K562 (cell line): ENCODE measurements at regions of chr3 and their contacts with region 1.

Region 1: DNA sequence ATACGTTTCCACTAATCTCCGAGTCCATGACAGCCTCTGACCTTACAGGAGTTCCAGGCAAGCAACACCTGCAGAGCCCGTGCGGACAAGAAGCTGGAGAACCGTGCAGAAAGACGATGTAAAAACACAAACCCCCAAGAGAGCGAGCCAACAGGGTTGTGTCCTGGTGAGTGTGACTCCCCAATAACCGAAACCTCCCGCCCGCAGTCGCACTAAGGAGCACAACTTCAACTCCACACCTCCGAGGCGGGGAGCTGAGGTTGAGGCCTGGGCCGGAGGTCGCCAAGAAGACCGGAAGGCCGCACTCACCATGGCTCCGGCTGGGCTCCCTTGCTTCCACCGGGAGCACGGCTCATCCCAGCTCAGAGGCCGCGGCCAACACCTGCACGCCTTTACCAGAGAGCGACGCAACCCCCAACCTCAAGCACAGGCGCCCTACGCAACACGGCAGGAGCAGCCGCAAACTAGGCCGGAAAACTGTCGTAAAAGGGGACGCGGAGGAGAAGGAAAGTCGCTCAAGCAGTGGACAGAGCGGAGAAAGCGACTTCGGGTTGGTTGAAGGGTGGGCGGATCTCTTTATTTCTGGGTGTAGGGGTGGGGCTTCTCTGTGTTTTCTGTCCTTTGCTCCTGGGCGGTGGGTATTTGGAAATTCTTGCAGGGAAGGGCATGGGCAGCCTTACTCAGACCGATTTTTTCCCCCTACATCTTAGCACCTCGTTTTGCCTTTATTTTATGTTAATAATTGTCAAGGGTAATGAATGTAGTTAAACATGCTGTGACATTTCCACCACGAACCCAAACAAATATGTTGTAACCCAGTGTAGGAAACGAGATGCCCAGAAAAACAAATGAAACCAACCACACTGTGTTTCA is at the start of gene DNAJC19:
- DNase-seq: peak; percentile 88 to 97 (median 89)
- ATAC-seq: peak; percentile 96
- H3K4me3 ChIP-seq: peak within 1 kb of the TSS; percentile 94
- H3K27ac ChIP-seq: peak within 1 kb of the TSS; percentile 82
- H3K4me1 ChIP-seq: peaks cover 2 to 11% of the 10 kb centered on the region in 2 experiments; a peak in 3 of 5 replicates
- H3K27me3 ChIP-seq: no peaks in the 10 kb centered on the region; a peak in 1 of 5 replicates
- CTCF ChIP-seq: no peak
- EP300 ChIP-seq: no peak
- POLR2A ChIP-seq: peak; percentile 93
- RAD21 ChIP-seq: no peak
- polyA plus RNA-seq, gene DNAJC19: 116 to 136 TPM

Region 2: DNA sequence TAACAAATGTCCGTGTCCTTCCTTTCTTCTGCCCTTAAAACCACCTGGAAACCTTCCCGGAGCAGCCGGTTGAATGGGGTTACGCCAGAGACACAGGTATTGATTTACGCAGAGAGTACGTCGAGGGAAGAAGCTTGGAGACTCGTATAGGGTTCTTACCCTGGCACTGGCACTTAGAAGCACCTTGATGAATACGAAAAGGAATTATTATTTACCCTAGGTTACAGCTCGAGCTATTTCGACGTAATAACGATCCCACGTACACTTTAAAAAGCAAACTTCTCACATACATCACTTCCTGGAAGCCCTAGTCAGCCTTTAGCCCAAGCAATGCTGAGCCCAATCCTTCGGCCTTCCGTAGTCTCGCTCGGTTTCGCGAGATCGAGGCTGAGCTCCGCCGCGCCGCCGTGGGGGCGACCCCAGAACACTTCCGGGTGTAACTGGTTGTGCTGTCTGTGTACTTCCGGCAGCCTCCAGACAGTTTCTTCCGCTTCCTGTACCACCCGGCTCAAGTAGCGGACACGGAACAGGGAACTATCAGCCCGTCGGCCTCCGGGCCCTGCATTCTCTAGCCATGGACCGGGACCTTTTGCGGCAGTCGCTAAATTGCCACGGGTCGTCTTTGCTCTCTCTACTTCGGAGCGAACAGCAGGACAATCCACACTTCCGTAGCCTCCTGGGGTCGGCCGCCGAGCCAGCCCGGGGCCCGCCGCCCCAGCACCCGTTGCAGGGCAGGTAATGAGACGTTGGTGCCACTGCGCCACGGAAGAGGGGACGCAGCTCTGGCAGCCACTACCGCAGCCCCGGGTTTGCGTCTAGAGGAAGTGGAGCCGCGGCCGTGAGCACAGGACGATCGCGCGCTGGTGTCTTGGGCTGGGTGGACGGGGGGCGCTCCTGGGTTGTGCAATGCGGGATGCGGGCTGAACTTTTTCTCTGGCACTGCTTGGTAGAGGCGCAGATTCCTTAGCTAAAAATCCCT is 387.6 kb before region 1 on chr3 and contains the start of gene TTC14:
- CTCF ChIA-PET with region 1: no interaction called
- POLR2A ChIA-PET with region 1: no interaction called
- in situ Hi-C with region 1: loop called (anchors 25 kb)
- intact Hi-C with region 1: loop called (anchors 10 kb)
- DNase-seq: peak; percentile 90 to 96 (median 92)
- ATAC-seq: peak; percentile 99
- H3K4me3 ChIP-seq: peak within 1 kb of the TSS; percentile 97
- H3K27ac ChIP-seq: peak within 1 kb of the TSS; percentile 87
- H3K4me1 ChIP-seq: no peaks in the 10 kb centered on the region; a peak in 1 of 5 replicates
- H3K27me3 ChIP-seq: no peaks in the 10 kb centered on the region
- CTCF ChIP-seq: 0 out of 6 replicates have a peak, but pooled peaks of 1 of the 3 experiments have one; percentile 13
- EP300 ChIP-seq: no peak
- POLR2A ChIP-seq: peak; percentile 88
- RAD21 ChIP-seq: no peak
- polyA plus RNA-seq, gene TTC14: 10.0 to 11.3 TPM

Region 3: DNA sequence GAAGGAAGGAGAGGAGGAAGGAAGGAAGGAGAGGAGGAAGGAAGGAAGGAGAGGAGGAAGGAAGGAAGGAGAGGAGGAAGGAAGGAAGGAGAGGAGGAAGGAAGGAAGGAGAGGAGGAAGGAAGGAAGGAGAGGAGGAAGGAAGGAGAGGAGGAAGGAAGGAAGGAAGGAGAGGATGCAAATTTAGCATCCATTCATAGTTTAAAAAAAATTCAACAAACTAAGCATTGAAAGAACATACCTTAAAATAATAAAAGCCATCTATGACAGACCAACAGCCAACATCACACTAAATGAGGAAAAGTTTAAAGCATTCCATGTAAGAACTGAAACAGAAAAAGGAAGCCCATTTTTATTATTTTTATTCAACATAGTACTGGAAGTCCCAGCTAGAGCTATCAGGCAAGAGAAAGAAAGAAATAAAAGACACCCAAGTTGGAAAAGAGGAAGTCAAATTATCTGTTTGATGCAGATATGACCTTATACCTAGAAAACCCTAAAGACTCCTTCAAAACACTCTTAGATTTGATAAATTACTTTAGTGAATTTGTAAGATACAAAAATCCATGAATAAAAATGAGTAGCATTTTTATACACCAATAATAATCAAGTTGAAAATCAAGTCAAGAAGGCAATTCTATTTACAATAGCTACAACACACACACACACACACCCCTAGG is 129.2 kb before region 1 on chr3:
- CTCF ChIA-PET with region 1: no interaction called
- POLR2A ChIA-PET with region 1: no interaction called
- in situ Hi-C with region 1: no loop called
- intact Hi-C with region 1: loop called (anchors 10 kb)
- DNase-seq: peak in 1 of 4 experiments; percentile 35
- ATAC-seq: peak; percentile 83
- H3K4me3 ChIP-seq: no peak overlapping the region
- H3K27ac ChIP-seq: peak overlapping the region; percentile 47; the same call in 2 of the 3 replicates
- H3K4me1 ChIP-seq: peaks cover 12 to 13% of the 10 kb centered on the region in 2 experiments; a peak in 4 of 5 replicates
- H3K27me3 ChIP-seq: no peaks in the 10 kb centered on the region
- CTCF ChIP-seq: no peak
- EP300 ChIP-seq: peak; percentile 35; the same call in 1 of the 2 replicates
- POLR2A ChIP-seq: no peak
- RAD21 ChIP-seq: no peak

Region 4: GRCh38 chr3:180912304-180913296 is 76.9 kb before region 1 on chr3 and contains the start of gene FXR1:
- CTCF ChIA-PET with region 1: no interaction called
- POLR2A ChIA-PET with region 1: no interaction called
- in situ Hi-C with region 1: no loop called
- intact Hi-C with region 1: loop called (anchors 2 kb)
- DNase-seq: peak; percentile 87 to 91 (median 90)
- ATAC-seq: peak; percentile 96
- H3K4me3 ChIP-seq: peak within 1 kb of the TSS; percentile 99
- H3K27ac ChIP-seq: peak within 1 kb of the TSS; percentile 100
- H3K4me1 ChIP-seq: peaks cover 3 to 12% of the 10 kb centered on the region in 2 experiments; a peak in 3 of 5 replicates
- H3K27me3 ChIP-seq: no peaks in the 10 kb centered on the region
- CTCF ChIP-seq: peak; percentile 49 to 70 (median 50); a peak in 5 of 6 replicates
- EP300 ChIP-seq: no peak
- POLR2A ChIP-seq: peak; percentile 95
- RAD21 ChIP-seq: peak in 1 of 2 experiments; percentile 20; a peak in 1 of 4 replicates
- polyA plus RNA-seq, gene FXR1: 59.4 to 81.1 TPM

Region 5: GRCh38 chr3:182802413-182803390 is 1813.2 kb after region 1 on chr3:
- CTCF ChIA-PET with region 1: no interaction called
- POLR2A ChIA-PET with region 1: no interaction called
- in situ Hi-C with region 1: no loop called
- intact Hi-C with region 1: loop called (anchors 5 kb)
- DNase-seq: no peak
- ATAC-seq: peak; percentile 9
- H3K4me3 ChIP-seq: no peak overlapping the region
- H3K27ac ChIP-seq: peak overlapping the region; percentile 29; the same call in 1 of the 3 replicates
- H3K4me1 ChIP-seq: peaks cover 3 to 21% of the 10 kb centered on the region in 2 experiments; a peak in 3 of 5 replicates
- H3K27me3 ChIP-seq: no peaks in the 10 kb centered on the region
- CTCF ChIP-seq: no peak
- EP300 ChIP-seq: no peak
- POLR2A ChIP-seq: no peak
- RAD21 ChIP-seq: no peak